ENCODE measurements at regions of chr16 and their contacts with region 1.

Region 1: DNA sequence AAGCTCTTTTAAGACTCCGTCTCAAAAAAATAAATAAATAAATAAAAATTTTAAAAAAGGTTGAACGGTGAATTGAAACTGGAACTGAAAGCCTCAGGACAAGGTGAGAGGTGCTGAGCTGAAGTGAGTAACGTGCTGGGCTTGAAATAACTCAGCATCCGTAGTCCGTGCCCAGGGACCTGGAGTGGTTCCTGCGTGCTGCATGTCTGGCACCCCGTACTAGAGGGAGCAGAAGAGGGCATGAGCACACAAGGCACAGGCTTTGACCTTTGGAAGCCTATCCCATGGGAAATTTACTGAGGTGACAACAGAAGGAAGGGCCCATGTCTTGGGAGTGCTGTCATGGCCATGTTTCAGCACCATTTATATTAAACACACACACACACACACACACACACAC is 4.5 kb upstream of the MEIOB start:
- DNase-seq: peak; percentile 44
- H3K4me3 Mint-ChIP-seq: no peak overlapping the region
- H3K27ac Mint-ChIP-seq: no peak overlapping the region
- H3K4me1 Mint-ChIP-seq: peaks cover 14% of the 10 kb centered on the region
- H3K27me3 Mint-ChIP-seq: peaks cover 24% of the 10 kb centered on the region

Region 2: GRCh38 chr16:1863681-1864460 is 12.6 kb before region 1 on chr16:
- CTCF ChIA-PET with region 1: interaction called, 15 read pairs
- POLR2A ChIA-PET with region 1: interaction called, 4 read pairs
- DNase-seq: no peak
- H3K4me3 Mint-ChIP-seq: no peak overlapping the region
- H3K27ac Mint-ChIP-seq: no peak overlapping the region
- H3K4me1 Mint-ChIP-seq: no peaks in the 10 kb centered on the region
- H3K27me3 Mint-ChIP-seq: peaks cover 26% of the 10 kb centered on the region